Activated CD8-positive, alpha-beta memory T cell treated with anti-CD3 and anti-CD28 coated beads, Interleukin-2, amount 10 ng/mL, durations not matched to agents 7 days and 5 days (primary cell): ENCODE measurements at regions of chr19 and their contacts with region 1.

Region 1: GRCh38 chr19:50357178-50358100 is 8.0 kb downstream of the NAPSA start:
- DNase-seq: peak; percentile 93
- ATAC-seq: peak; percentile 89
- H3K4me3 Mint-ChIP-seq: peak overlapping the region; percentile 83
- H3K27ac Mint-ChIP-seq: peak overlapping the region; percentile 98
- H3K4me1 Mint-ChIP-seq: peaks cover 39% of the 10 kb centered on the region
- H3K27me3 Mint-ChIP-seq: no peaks in the 10 kb centered on the region

Region 2: DNA sequence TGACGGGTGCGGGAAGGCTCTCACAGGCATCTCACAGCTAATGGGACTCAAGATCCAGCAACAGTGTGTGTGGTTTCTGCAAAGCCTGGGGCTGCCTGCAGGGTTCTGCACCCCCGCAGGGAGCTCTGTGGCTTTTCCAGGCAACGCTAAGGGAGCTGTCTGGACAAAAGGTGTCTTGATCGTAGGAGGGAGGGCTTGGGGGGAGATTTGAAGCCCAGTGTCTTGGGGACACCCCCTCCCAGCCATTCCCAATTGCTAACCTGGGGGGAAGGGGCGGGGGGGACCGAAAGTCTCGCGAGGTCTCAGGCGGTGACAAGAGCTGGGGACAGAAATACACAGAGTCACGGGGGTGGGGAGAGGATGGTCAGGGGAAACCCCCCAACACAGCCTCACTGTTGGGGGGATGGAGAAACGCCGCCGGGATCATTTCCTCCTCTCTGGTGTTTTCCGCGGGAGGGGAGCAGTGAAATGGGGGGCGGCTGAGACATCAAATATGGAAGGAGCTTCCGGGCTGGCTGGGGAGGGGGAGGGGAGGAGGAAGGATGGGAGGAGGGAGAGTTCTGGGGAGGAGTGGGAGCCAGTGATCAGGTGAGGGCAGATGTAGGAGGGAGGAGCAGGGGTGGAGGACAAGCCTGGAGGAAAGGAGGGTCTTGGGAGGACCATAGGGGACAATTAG is 41.5 kb before region 1 on chr19:
- CTCF ChIA-PET with region 1: no interaction called
- DNase-seq: no peak
- ATAC-seq: no peak
- H3K4me3 Mint-ChIP-seq: no peak overlapping the region
- H3K27ac Mint-ChIP-seq: no peak overlapping the region
- H3K4me1 Mint-ChIP-seq: peaks cover 4% of the 10 kb centered on the region
- H3K27me3 Mint-ChIP-seq: peaks cover 45% of the 10 kb centered on the region

Region 3: GRCh38 chr19:50333035-50333736 is 24.3 kb before region 1 on chr19:
- CTCF ChIA-PET with region 1: interaction called, 17 read pairs
- DNase-seq: peak; percentile 97
- ATAC-seq: peak; percentile 76
- H3K4me3 Mint-ChIP-seq: peak overlapping the region; percentile 81
- H3K27ac Mint-ChIP-seq: peak overlapping the region; percentile 90
- H3K4me1 Mint-ChIP-seq: peaks cover 58% of the 10 kb centered on the region
- H3K27me3 Mint-ChIP-seq: peaks cover 35% of the 10 kb centered on the region

Region 4: GRCh38 chr19:50368649-50369570 is 11.5 kb after region 1 on chr19:
- CTCF ChIA-PET with region 1: interaction called, 64 read pairs
- DNase-seq: peak; percentile 90
- ATAC-seq: peak; percentile 82
- H3K4me3 Mint-ChIP-seq: peak overlapping the region; percentile 88
- H3K27ac Mint-ChIP-seq: peak overlapping the region; percentile 88
- H3K4me1 Mint-ChIP-seq: peaks cover 39% of the 10 kb centered on the region
- H3K27me3 Mint-ChIP-seq: no peaks in the 10 kb centered on the region

Region 5: GRCh38 chr19:50383852-50384684 is 26.6 kb after region 1 on chr19 and contains the start of gene POLD1:
- CTCF ChIA-PET with region 1: interaction called, 12 read pairs
- DNase-seq: peak; percentile 99
- ATAC-seq: peak; percentile 89
- H3K4me3 Mint-ChIP-seq: peak within 1 kb of the TSS; percentile 98
- H3K27ac Mint-ChIP-seq: peak within 1 kb of the TSS; percentile 95
- H3K4me1 Mint-ChIP-seq: peaks cover 37% of the 10 kb centered on the region
- H3K27me3 Mint-ChIP-seq: no peaks in the 10 kb centered on the region
- total RNA-seq, gene POLD1: 158 to 215 TPM

Region 6: GRCh38 chr19:50449236-50449899 is 91.9 kb after region 1 on chr19:
- CTCF ChIA-PET with region 1: no interaction called
- DNase-seq: no peak
- ATAC-seq: no peak
- H3K4me3 Mint-ChIP-seq: no peak overlapping the region
- H3K27ac Mint-ChIP-seq: no peak overlapping the region
- H3K4me1 Mint-ChIP-seq: no peaks in the 10 kb centered on the region
- H3K27me3 Mint-ChIP-seq: peaks cover 5% of the 10 kb centered on the region

Region 7: DNA sequence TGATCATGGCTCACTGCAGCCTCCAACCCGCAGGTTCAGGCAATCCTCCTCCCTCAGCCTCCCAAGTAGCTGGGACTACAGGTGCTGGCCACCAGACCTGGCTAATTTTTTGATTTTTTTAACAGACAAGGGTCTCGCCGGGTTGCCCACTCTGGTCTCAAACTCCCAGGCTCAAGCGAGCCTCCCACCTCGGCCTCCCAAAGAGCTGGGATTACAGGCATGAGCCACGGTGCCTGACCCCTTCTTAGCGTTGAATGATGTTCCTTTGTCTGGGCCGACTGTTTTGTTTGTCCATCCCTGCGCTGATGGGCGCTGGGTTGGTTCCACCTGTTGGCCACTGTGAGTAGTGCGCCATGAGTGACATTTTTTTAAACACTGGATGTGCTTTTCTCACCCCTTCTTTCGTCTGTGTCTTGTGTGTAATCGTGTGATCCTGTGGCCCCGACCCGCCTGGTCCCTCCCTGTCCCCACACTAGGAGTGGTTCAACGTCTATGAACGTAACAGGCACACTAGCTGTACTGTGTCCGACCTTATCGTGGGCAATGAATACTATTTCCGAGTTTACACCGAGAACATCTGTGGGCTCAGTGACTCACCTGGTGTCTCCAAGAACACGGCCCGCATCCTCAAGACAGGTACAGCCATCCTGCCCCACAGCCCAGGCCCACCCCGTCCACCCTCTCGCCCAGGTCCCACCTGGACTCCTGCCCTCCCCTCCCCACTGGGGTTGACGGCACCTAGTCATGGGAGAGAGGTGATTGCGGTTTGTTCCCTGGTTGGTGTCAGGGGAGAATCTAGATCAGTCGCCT is 103.8 kb after region 1 on chr19:
- CTCF ChIA-PET with region 1: interaction called, 63 read pairs
- DNase-seq: peak; percentile 78
- ATAC-seq: peak; percentile 85
- H3K4me3 Mint-ChIP-seq: no peak overlapping the region
- H3K27ac Mint-ChIP-seq: no peak overlapping the region
- H3K4me1 Mint-ChIP-seq: peaks cover 14% of the 10 kb centered on the region
- H3K27me3 Mint-ChIP-seq: peaks cover 3% of the 10 kb centered on the region

Region 8: DNA sequence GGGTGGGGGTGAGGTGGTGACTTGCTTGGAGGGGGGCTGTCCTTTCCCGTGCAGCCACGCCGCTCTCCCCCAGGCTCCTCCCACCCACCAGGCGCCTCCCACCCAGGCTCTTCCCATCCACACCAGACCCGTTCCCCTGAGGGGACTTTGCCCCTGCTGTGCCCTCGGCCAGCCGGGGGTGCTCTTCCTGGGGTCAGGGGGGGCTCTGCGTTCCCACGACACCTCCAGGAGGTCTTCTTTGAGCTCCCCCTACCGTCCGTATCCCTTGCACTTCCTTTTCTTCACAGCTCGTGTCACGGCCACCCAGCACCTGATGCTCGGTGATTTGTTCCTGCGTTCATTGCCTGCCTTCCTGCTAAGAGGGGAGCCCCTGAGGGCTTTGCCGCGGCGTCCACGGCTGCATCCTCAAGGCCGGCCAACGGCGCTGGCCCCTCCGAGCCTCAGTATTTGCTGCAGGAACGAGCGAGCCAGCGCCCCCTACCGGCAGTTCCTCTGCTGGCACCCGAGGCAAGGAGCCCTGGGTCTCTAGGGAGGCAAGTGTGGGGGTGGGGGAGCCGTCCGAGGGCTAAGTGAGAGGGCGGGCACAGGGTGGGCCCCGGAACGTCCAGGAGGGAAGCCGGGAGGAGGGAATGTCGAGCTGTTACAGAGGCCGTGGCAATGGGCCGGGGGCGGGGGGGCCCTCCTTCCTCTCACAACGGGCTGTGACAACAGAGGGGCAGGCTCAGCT is 199.0 kb after region 1 on chr19:
- CTCF ChIA-PET with region 1: interaction called, 20 read pairs
- DNase-seq: peak; percentile 84
- ATAC-seq: peak; percentile 90
- H3K4me3 Mint-ChIP-seq: peak overlapping the region; percentile 82
- H3K27ac Mint-ChIP-seq: peak overlapping the region; percentile 65
- H3K4me1 Mint-ChIP-seq: peaks cover 4% of the 10 kb centered on the region
- H3K27me3 Mint-ChIP-seq: peaks cover 32% of the 10 kb centered on the region